AG04449 (cell line): ENCODE measurements at regions of chr16 and their contacts with region 1.

Region 1: DNA sequence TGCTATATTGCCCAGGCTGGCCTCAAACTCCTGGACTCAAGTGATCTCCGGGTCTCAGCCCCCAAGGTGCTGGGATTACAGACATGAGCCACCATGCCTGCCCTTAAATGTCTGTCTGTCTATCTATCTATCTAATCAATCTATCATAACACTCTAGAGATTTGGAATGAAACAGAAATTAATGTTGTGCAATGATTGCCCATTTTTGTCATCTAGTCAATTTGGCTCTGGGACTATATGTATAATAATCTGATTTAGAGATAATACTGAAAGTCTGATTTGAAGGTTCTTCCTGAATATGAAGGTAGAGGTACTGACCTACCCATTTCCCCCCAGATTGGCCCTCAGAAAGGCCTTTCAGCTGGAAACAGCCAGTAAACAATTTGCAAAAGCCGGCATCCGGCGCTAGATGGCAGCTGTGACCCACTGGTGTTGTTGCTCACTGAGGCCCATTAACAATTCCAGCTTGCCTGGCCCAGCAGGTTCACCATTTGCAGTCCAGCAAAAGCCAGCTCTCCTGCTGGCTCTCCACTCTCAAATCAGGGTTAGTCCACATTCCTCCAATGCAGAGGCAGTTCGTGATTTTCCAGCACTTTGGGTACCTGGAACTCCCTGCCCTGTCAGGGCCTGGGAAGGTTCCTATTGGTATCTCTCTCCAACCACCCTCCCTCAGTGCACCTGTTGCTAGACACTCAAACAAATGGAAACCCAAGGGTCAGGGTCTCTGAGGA is 22.9 kb upstream of the C16orf87 start:
- DNase-seq: no peak
- H3K4me3 ChIP-seq: no peak overlapping the region
- CTCF ChIP-seq: peak; percentile 84

Region 2: DNA sequence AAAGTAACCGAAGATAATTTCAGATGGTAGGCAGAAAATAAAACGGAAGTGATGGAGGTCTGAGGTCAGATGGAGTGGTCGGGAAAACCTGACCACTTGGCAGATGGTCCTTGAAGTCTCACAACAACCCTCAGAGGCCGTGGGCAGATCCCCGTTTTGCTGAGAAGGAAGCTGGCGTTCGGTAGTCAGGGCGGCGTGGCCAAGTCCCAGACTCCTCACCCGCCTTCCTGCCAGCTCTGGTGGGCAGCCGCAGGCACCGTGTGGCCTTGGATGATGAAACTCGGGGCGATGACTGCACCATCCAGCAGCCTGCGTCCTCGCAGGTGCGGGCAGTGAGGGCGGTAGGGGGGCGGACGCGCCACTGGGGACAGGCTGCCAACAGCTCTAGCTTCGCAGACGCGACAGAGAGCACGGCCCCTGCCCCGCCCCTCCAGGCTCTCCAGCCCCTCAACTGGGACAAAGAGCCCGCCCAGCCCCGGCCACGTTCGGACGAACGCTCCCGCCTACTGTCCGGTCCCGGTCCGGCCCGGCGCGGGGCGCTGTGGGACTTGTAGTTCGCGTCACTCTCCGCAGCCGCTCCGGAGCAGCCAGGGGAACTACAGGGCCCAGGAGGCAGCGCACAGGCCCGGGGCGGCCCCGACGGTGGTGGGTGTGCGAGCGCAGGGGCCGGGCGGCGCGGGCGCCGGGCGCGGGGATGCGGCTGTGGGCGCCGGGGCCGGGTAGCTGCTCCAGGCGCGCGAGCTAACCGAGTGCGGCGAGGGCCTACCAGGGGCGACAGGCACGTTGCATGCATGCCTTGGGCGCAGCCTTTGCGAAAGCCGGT is 30.0 kb after region 1 on chr16 and contains the start of gene GPT2:
- CTCF ChIA-PET with region 1: interaction called, 35 read pairs
- POLR2A ChIA-PET with region 1: no interaction called
- DNase-seq: peak; percentile 59
- H3K4me3 ChIP-seq: peak within 1 kb of the TSS; percentile 94
- CTCF ChIP-seq: peak; percentile 13

Region 3: DNA sequence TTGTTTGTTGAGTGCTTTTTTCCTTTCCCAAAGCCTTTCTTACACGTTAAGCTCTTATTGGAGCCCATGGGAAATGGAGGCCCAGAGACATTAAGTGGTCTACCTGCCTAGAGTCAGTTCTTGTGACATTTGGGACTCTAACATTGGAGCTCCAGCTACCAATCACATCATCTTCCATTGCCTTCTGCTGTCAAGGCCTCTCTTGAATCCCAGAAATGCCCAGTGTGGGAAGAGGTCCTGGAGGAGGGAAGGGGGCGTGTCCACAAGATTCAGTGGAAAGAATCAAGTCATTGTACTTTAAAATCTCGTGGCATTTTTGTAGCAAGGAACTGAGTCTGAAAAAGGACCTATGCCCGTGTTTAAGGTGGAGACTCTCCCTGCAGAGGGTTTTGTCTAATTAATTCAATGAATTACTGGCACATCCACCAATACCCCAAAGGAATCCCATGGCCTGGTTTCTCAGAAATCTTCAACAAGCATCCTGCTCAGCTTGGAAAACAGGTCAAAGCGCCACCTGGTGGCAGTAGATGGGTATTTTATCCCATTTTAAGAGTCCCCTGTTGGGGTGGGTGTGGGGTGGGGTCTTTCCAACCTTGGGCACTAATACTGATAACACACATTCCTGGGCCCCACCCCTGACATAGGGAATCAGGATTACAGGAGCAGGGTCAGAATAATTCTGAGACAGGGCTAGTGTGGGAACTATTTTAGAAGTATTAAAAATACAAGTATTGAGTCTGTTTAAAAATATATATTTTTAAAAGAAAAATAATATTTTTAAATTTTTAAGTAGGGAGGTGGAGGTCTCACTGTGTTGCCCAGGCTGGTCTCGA is 54.9 kb after region 1 on chr16:
- CTCF ChIA-PET with region 1: interaction called, 284 read pairs
- POLR2A ChIA-PET with region 1: no interaction called
- DNase-seq: peak; percentile 5
- H3K4me3 ChIP-seq: no peak overlapping the region
- CTCF ChIP-seq: peak; percentile 58

Region 4: DNA sequence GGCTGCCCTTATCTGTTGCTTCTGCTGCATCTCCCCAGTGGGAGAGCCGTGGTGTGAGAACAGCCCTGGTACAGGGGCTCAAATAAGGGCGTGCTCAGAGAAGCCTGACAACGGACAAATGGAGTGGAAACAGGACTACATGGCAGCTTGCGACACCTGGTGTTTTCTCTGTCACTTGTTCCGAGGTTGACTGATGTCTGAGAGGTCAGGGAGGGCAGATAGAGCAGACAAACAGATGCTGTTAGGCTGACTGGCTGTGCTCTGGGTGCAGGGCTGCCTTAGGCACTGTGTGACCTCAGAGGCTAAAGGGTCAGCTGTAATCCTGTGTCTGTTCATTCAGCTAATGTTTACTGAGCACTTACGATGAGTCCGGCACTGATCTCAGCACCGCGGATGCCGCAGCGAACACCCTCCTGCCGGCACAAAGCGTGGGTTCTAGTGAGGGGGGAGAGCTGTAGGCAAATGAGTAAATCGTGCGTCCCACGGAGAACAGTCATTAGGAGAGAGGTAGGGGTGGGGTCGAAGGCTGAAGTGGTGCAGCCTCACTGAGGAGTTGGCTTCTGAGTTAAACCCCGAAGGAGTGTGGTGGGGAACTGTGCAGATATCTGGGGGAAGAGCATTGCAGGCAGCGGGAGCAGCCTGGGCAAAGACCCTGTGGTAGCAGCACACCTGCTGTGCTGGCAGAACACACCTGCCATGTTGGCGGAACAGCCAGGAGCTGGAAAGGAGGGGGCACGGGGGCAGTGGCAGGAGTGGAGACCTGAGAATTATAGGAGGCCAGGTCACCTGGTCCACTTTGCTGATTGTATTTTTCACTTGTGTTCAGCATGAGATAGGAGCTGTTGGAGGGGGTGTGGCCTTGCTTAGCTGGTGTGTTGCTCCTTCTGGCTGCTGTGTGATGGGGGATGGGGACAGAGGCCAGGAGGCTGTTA is 65.2 kb after region 1 on chr16:
- CTCF ChIA-PET with region 1: interaction called, 284 read pairs
- POLR2A ChIA-PET with region 1: no interaction called
- DNase-seq: no peak
- H3K4me3 ChIP-seq: no peak overlapping the region
- CTCF ChIP-seq: no peak